Posterior vena cava (tissue), 2 donors: ENCODE measurements at regions of chr3 and their contacts with region 1.

Region 1: DNA sequence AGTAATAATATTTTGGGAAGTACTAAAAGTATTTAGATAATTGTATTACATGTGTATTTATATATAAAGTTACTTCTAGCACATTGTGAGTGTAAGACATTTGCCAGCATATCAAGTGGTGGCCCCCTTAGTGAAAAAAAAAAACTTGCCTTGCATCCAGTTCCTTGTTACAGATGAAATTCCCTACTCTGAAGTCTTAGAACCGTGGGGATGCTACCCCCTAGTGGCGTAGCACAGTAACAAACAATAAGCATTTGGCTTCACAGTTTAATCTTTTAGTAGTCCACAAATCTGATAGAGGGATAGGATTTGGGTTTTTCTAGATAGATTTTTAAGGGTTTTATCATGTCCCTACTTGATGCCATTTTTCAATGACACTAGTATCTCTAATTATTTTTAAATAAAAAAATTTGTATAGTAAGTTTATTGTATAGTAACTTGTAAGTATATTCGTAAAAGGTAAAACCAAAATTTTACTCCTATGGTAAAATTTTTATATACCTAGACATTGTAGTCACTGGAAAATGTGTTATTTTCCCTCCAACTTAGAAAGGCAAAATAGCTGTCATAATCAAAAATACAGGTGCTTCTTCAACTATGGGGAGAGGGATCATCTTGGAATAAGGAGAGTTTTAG is 14.3 kb downstream of the SMC4 start:
- DNase-seq: no peak

Region 2: GRCh38 chr3:160150525-160150924 is 263.2 kb before region 1 on chr3:
- intact Hi-C with region 1: loop called in 1 of 2 experiments (anchors 10 kb)
- DNase-seq: no peak

Region 3: DNA sequence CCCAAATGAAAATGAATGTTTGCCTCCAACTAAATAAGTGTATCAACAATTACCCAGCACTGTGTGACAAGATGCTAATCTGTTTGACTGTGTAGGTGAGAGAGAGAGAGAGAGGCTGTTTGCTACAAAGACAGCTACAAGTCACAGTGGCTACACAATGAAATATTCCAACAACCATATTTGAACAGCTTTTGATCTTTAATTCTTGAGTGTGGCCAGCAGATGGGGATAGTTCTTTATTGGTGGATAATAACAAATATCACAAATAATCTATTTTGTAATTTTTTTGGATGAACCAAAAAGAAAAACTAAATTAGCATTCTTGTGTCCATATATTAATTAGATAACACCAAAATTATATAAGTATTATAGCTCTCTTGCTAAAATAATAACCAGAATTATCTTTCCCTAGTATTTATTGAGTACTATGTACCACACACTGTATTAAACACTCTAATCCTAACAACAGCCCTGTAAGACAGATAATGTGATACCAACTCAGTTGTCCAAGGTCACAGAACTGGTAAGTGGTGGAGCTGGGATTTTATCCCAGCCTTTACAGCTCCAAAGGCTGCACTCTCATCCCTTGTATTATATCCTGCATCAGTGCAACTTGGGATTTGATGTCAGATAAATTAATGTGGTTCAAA is 250.4 kb before region 1 on chr3:
- intact Hi-C with region 1: loop called (anchors 10 kb)
- DNase-seq: no peak

Region 4: DNA sequence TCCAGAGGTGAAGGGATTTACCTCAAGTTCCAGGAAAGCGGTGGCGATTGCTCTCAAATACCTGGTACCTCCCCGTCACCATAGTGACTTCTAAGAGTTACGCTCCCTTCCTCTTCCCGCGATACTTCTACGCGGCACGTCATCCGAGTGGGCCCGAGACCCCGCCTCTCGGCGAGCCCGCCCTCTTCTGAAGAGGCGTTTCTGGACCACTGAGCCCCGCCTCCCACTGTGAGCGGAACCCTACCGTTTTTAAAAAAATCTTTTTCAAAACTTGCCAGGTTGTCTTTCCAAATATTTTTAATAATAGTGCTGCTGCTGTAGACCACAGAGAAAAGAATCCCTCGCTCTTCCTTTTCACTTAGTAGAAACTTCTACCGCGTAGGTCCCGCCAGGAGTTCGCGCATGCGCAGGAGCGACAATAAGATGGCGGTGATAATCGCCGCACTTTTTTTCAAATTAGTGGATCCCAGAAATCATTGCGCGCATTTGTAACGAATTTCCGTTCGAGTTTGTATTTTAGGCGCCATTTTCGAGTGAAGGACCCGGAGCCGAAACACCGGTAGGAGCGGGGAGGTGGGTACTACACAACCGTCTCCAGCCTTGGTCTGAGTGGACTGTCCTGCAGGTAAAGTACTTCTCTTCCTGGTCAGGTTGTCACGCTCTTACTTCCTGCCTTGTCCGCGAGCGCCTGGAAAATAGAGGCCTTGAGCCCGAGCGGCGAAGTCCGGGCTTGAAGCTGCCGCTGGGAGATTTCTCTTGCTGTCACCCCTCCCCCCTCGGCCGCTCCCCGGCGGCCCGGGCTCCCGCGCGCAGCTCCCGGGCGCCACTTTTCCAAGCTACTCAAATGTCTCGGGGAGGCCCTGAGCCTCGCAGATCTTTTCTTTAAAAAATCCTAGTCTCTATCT is 14.4 kb before region 1 on chr3 and contains the starts of genes IFT80 and SMC4:
- intact Hi-C with region 1: no loop called
- DNase-seq: peak; percentile 99
- total RNA-seq, gene IFT80: 19.4 to 20.0 TPM
- total RNA-seq, gene SMC4: 21.5 to 23.2 TPM